Activated CD4-positive, alpha-beta T cell treated with anti-CD3 and anti-CD28 coated beads for 36 hours (primary cell): ENCODE measurements at regions of chr4 and their contacts with region 1.

Region 1: DNA sequence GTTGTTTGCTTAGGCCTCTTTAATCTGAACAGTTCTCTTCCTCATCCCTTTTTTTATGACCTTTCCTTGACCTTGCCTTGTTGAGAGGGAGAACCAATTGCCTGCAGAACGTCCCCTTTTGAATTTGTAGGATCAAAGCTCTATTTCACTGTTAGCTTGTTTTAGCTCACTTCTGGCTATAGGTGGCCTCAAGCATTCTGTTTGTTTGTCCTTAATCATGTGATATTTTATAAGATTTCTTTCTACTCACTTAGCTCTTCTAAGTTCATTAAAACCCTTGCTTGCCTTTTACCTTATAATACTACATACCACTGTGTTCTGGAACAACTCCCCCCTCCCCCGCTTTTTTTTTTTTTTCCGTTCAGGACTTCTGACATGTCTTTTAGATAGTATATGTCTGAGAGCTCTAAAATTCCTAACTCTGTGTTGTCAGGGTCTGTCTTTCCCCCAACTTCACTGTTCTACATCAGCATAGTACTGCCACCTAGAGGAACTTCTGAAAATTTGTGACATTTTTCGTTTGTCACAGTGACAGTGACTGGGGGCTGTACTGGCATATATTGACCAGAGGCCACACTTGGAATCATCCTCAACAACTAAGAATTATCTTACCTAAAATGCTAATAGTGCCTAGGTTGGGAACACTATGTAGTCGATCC is 128.5 kb downstream of the LARP7 start:
- DNase-seq: peak; percentile 11
- ATAC-seq: peak; percentile 60
- H3K4me3 Mint-ChIP-seq: no peak overlapping the region
- H3K27ac Mint-ChIP-seq: no peak overlapping the region
- H3K4me1 Mint-ChIP-seq: no peaks in the 10 kb centered on the region
- H3K27me3 Mint-ChIP-seq: peaks cover 4% of the 10 kb centered on the region

Region 2: GRCh38 chr4:112327965-112328733 is 437.3 kb before region 1 on chr4:
- CTCF ChIA-PET with region 1: interaction called, 5 read pairs
- POLR2A ChIA-PET with region 1: no interaction called
- intact Hi-C with region 1: loop called (anchors 5 kb)
- DNase-seq: peak; percentile 20
- ATAC-seq: peak; percentile 47
- H3K4me3 Mint-ChIP-seq: no peak overlapping the region
- H3K27ac Mint-ChIP-seq: no peak overlapping the region
- H3K4me1 Mint-ChIP-seq: peaks cover 4% of the 10 kb centered on the region
- H3K27me3 Mint-ChIP-seq: no peaks in the 10 kb centered on the region

Region 3: DNA sequence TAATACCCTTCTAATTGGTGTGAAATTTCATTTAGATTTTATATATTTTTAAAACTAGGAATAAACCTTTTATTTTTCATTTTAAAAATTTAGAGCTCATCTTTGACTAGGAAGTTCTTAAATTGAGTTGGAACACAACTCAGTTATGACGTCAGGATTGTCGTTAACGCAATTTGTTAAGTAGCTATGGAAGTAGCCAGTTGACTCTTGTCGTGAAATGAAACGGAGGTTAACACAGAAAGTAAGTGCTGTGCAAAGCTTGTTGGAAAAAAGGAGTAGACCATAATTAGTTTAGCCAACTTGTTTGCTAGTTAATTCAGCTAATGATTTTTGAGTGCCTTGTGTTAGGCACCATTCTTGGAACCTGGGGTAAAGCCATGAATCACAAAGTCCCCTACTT is 110.2 kb before region 1 on chr4:
- CTCF ChIA-PET with region 1: interaction called, 10 read pairs
- POLR2A ChIA-PET with region 1: no interaction called
- intact Hi-C with region 1: no loop called
- DNase-seq: no peak
- ATAC-seq: no peak
- H3K4me3 Mint-ChIP-seq: no peak overlapping the region
- H3K27ac Mint-ChIP-seq: no peak overlapping the region
- H3K4me1 Mint-ChIP-seq: no peaks in the 10 kb centered on the region
- H3K27me3 Mint-ChIP-seq: no peaks in the 10 kb centered on the region

Region 4: DNA sequence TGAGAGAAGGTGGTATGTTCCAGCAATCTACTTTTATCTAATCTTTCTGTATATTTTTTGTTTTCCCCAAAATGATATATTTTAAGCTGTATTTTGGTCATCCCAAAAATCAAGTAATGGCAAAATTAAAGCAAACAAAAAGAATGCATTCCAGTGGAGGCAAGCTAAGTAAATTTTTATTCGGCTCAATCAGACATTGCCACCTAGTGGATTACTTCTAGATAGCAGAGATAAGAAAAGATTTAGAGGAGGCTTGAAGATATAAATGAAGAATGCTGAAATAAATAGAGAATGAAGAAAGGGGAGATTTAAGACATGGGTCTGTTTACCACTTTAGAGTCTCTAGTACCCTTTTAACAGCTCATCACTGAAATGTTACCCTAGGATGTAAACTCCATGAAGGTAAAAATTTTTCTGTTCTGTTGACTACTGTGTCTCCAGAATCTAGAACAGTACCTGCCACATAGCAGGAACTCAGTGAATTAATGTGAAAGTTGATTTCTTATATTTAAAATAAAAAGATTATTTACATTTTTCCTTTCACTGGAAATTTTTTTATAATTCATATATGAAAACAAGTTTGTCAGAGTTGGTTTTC is 173.1 kb after region 1 on chr4:
- CTCF ChIA-PET with region 1: interaction called, 18 read pairs
- POLR2A ChIA-PET with region 1: no interaction called
- intact Hi-C with region 1: loop called (anchors 1 to 2 kb)
- DNase-seq: no peak
- ATAC-seq: no peak
- H3K4me3 Mint-ChIP-seq: no peak overlapping the region
- H3K27ac Mint-ChIP-seq: no peak overlapping the region
- H3K4me1 Mint-ChIP-seq: no peaks in the 10 kb centered on the region
- H3K27me3 Mint-ChIP-seq: peaks cover 8% of the 10 kb centered on the region

Region 5: GRCh38 chr4:113094802-113095201 is 329.4 kb after region 1 on chr4:
- CTCF ChIA-PET with region 1: no interaction called
- POLR2A ChIA-PET with region 1: no interaction called
- intact Hi-C with region 1: loop called in 1 of 2 experiments (anchors 5 kb)
- DNase-seq: no peak
- ATAC-seq: no peak
- H3K4me3 Mint-ChIP-seq: no peak overlapping the region
- H3K27ac Mint-ChIP-seq: no peak overlapping the region
- H3K4me1 Mint-ChIP-seq: no peaks in the 10 kb centered on the region
- H3K27me3 Mint-ChIP-seq: peaks cover 2% of the 10 kb centered on the region